ENCODE measurements at regions of chr20 and their contacts with region 1.

Region 1: DNA sequence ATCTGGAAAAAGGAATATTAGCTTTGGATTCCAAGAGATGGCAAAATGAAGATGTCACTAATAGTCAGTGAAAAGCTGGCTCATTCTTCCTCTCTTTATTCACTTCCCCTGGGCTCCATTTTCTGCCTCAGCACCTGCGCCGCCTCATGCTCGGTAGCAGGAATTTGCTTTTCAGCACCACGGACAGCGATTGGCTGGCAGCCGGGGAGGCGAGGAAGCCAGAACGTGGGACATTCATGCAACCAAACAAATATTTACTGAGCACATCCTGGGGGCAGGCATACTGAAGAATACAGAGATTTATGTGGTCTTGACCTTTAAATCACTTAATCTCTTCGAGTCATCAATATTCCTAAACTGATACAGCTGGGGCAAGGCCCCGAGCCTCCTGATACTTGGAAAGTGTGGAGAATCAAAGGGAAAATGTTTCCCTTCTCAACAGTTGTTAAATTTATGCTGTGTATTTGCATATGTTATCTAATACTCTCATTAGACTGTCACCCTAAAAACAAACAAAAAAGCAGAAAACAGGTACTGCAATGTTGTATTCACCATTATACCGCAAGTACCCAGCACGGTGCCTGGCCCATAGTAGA is 12.1 kb upstream of the PDYN start:
- DNase-seq: peak; percentile 29
- H3K4me3 ChIP-seq: no peak overlapping the region
- H3K27ac ChIP-seq: no peak overlapping the region
- H3K27me3 ChIP-seq: no peaks in the 10 kb centered on the region
- CTCF ChIP-seq: no peak

Region 2: DNA sequence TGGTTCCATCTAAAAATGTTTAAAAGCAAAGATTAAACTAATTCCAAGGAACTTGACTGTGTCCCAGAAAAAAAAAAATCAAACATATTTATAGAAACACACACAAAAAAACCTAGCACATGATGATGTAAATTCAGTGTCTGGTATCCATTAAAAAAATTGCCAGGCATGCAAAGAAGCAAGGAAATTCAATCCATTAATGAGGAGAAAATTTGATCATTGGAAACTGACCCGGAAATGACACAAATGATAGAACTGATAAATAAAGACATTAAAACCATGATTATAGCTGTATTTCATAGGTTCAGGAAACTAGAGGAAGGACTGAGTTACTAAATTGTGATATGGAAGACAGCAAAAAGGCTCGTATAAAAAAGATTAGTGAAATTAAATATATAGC is 46.8 kb before region 1 on chr20:
- CTCF ChIA-PET with region 1: no interaction called
- POLR2A ChIA-PET with region 1: no interaction called
- DNase-seq: no peak
- H3K4me3 ChIP-seq: no peak overlapping the region
- H3K27ac ChIP-seq: no peak overlapping the region
- H3K27me3 ChIP-seq: peaks cover 22% of the 10 kb centered on the region
- CTCF ChIP-seq: no peak

Region 3: DNA sequence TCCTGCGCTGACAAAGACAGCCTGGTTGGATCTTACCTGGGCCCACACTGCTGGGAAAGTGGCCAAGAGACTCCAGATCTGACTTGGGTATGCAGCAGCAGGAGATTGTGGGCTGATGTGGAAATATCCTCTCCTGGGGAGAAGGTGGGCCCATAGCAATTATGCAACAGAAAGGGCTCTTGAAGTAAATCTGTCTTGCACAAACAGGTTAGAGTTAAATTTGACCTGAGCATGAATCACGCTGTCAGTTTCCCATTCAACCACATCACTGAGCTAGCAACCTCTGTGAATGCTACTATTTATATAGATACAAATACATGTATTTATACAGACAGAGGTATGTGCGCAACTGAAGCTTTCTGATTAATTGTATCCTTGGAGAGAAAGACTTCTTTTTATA is 16.2 kb after region 1 on chr20:
- CTCF ChIA-PET with region 1: interaction called, 11 read pairs
- POLR2A ChIA-PET with region 1: no interaction called
- DNase-seq: no peak
- H3K4me3 ChIP-seq: no peak overlapping the region
- H3K27ac ChIP-seq: no peak overlapping the region
- H3K27me3 ChIP-seq: no peaks in the 10 kb centered on the region
- CTCF ChIP-seq: no peak

Measured in AG04450 (cell line).